CD14-positive monocyte (primary cell): ENCODE measurements at regions of chr1 and their contacts with region 1.

Region 1: DNA sequence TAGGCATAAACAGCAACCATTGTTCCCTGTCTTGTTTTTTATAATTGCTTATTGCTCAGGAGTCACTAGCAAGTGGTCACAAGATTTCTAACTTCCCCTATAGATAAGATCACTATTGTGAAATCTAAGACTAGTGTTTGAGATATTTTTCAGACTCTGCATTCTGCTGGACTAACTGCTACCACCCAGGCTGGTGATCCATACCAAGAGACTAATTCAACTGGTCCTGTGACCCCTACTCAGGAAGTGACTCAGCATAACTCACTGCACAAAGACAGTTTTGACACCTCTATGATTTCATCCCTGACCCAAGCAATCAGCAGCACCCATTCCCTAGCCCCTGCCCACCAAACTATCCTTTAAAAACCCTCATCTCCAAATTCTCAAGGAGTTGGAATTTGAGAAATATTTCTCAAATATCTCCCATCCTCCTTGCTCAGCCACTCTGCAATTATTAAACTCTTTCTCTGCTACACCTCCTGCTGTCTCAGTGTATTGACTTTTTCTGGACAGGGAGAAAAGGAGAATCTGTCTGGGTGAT is 52.7 kb downstream of the TRIM33 start:
- DNase-seq: peak; percentile 65 to 86 (median 73)
- H3K4me3 ChIP-seq: no peak overlapping the region
- H3K4me3 Mint-ChIP-seq: peak overlapping the region in 1 of 2 donors; percentile 46
- H3K27ac ChIP-seq: peak overlapping the region; percentile 28 to 81
- H3K27ac Mint-ChIP-seq: peak overlapping the region; percentile 83 to 95 (median 90)
- H3K4me1 ChIP-seq: peaks cover 12 to 13% of the 10 kb centered on the region in 2 donors
- H3K4me1 Mint-ChIP-seq: peaks cover 13% of the 10 kb centered on the region
- H3K27me3 ChIP-seq: no peaks in the 10 kb centered on the region
- H3K27me3 Mint-ChIP-seq: no peaks in the 10 kb centered on the region
- CTCF ChIP-seq: no peak

Region 2: GRCh38 chr1:114390960-114391359 is 67.3 kb before region 1 on chr1:
- intact Hi-C with region 1: no loop called
- DNase-seq: no peak
- H3K4me3 ChIP-seq: no peak overlapping the region
- H3K4me3 Mint-ChIP-seq: no peak overlapping the region
- H3K27ac ChIP-seq: no peak overlapping the region
- H3K27ac Mint-ChIP-seq: no peak overlapping the region
- H3K4me1 ChIP-seq: no peaks in the 10 kb centered on the region
- H3K4me1 Mint-ChIP-seq: no peaks in the 10 kb centered on the region
- H3K27me3 ChIP-seq: no peaks in the 10 kb centered on the region
- H3K27me3 Mint-ChIP-seq: peaks cover 0 to 3% (median 0%) of the 10 kb centered on the region in 3 donors
- CTCF ChIP-seq: no peak

Region 3: DNA sequence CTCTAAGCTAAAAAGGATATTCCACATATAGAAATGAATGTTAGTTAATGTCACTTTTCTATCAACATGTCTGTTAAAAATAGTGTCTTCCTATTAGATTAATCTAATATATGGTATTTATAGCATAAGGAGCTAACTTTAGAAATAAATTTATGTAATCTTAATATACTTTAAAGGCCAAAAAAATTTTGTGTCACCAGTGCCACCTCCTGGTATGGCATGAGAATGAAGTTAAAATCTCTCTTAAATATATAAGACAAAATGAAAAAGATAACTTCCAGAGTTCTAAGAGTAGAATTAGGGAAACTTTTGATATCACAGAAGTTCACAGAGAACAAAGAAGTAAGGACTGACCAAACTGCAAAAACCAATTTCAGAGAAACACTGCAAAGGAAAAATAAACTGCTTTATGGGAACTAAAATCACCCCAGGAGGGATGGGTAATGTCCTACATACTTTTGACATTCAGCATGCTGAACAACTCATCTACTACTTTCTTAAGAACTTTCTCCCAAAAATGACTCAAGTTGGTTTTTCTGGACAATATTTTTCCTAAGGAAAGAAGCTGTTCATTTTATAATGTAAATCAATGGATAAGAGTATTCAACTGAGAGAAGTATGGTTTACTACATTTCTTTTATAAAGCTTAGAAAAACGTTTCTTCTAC is 30.1 kb before region 1 on chr1:
- intact Hi-C with region 1: no loop called
- DNase-seq: no peak
- H3K4me3 ChIP-seq: no peak overlapping the region
- H3K4me3 Mint-ChIP-seq: no peak overlapping the region
- H3K27ac ChIP-seq: no peak overlapping the region
- H3K27ac Mint-ChIP-seq: no peak overlapping the region
- H3K4me1 ChIP-seq: no peaks in the 10 kb centered on the region
- H3K4me1 Mint-ChIP-seq: no peaks in the 10 kb centered on the region
- H3K27me3 ChIP-seq: no peaks in the 10 kb centered on the region
- H3K27me3 Mint-ChIP-seq: no peaks in the 10 kb centered on the region
- CTCF ChIP-seq: peak; percentile 65

Region 4: DNA sequence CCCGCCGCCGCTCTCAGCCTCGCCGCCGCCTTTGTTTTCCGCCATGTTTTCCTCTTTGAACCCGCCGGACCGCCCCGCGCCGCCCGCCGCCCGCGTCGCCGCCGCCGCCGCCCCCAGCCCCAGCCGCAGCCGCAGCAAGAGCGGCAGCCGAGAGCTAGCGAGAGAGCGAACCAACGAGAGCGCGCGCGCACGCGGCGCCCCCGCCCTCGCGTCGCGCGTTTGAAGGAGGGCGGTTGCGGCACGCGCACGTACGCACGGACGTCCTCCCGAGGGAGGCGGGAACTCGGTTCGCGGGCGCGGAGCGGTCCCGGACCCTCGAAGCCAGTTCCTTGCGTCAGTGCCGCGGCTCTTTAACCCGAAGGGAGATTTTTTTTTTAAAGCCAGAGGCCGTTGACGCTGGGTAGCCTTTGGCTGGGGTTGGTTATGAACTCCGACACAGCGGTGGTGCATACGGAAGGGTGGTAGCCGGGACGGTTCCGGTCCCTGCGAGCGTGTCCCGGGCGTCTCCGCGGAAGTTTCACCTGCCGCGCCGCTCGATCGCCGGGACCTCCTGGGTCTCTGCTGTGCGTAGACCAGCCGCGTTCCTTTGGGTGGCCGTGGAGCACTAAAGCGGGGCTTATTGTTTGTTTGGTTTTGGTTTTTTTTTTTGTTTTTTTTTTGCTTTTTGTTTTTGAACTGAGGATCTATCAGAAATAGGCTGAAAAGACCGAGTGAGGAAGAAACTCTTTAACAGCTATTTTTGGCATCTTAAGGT is 52.9 kb after region 1 on chr1 and contains the start of gene TRIM33:
- intact Hi-C with region 1: loop called in 1 of 2 experiments (anchors 10 kb)
- DNase-seq: peak; percentile 89 to 93 (median 90)
- H3K4me3 ChIP-seq: peak within 1 kb of the TSS; percentile 88 to 98 (median 94)
- H3K4me3 Mint-ChIP-seq: peak within 1 kb of the TSS; percentile 96 to 98
- H3K27ac ChIP-seq: peak within 1 kb of the TSS; percentile 97 to 99
- H3K27ac Mint-ChIP-seq: peak within 1 kb of the TSS; percentile 96 to 99 (median 98)
- H3K4me1 ChIP-seq: peaks cover 29 to 42% of the 10 kb centered on the region in 2 donors
- H3K4me1 Mint-ChIP-seq: peaks cover 44% of the 10 kb centered on the region
- H3K27me3 ChIP-seq: no peaks in the 10 kb centered on the region
- H3K27me3 Mint-ChIP-seq: peaks cover 0 to 12% (median 2%) of the 10 kb centered on the region in 3 donors
- CTCF ChIP-seq: no peak
- polyA plus RNA-seq, gene TRIM33: 11.8 to 16.5 (median 13.7) TPM